ENCODE measurements at regions of chr9 and their contacts with region 1.

Region 1: DNA sequence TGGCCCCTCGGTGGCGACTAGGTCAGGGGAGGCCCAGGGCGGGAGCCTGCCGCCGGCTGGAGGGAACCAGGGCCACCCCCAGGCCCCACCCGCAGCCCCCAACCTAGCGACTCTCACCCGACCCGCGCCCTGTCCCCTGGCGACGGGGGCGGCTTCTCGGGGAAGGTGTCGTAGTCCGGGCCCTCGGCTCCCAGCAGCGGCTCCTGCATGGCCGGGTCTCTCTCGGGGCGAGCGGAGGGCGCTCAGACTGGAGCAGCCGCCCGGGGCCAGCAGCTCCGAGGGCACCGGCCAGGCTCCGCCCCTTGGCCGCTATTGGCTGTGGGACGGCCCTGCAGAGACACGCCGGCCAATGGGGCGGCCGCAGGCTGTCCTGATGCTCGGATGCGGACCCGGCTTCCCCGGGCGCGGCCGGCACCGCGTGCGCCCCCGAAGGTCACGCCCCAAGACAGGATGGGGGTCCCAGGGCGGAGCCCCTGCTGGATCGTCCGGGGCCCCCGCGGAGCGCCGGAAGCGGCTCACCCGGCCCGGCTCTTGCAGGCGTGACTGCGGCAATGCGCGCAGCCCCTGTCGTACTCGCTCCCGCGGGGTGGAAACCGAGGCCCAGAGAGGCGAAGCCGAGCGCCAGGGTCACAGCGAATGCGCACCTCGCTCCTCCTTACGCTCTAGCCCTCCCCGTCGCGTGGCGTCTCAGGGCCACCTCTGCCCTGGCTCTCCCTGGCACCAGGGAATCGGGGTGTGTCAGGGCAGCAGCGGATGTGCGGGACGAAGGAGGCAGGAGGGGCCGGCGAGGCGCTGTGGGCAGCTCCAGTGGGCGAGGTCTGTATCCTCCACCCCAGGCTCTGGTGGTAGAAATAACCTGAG is at the start of gene SLC2A6:
- DNase-seq: peak; percentile 69 to 90 (median 82)
- ATAC-seq: peak; percentile 94 to 96
- H3K4me3 Mint-ChIP-seq: peak within 1 kb of the TSS; percentile 74 to 86 (median 82)
- H3K27ac Mint-ChIP-seq: peak within 1 kb of the TSS in 9 of 10 donors; percentile 51 to 92 (median 77)
- H3K4me1 Mint-ChIP-seq: peaks cover 7 to 29% (median 13%) of the 10 kb centered on the region in 4 donors
- H3K27me3 Mint-ChIP-seq: no peaks in the 10 kb centered on the region
- polyA plus RNA-seq, gene SLC2A6: 4.0 to 6.0 (median 5.6) TPM

Region 2: GRCh38 chr9:133459476-133460404 is 19.3 kb before region 1 on chr9 and contains the start of gene CACFD1:
- POLR2A ChIA-PET with region 1: interaction called, 10 read pairs
- DNase-seq: peak; percentile 87 to 96 (median 88)
- ATAC-seq: peak; percentile 83 to 88
- H3K4me3 Mint-ChIP-seq: peak within 1 kb of the TSS; percentile 84 to 98 (median 91)
- H3K27ac Mint-ChIP-seq: peak within 1 kb of the TSS; percentile 84 to 97 (median 96)
- H3K4me1 Mint-ChIP-seq: peaks cover 4 to 15% (median 13%) of the 10 kb centered on the region in 4 donors
- H3K27me3 Mint-ChIP-seq: no peaks in the 10 kb centered on the region
- polyA plus RNA-seq, gene CACFD1: 2.5 to 3.7 (median 3.5) TPM

Region 3: GRCh38 chr9:133532937-133533668 is 54.0 kb after region 1 on chr9:
- POLR2A ChIA-PET with region 1: no interaction called
- DNase-seq: peak; percentile 36 to 87 (median 63)
- ATAC-seq: peak; percentile 37 to 63
- H3K4me3 Mint-ChIP-seq: peak overlapping the region; percentile 28 to 80 (median 64)
- H3K27ac Mint-ChIP-seq: peak overlapping the region in 9 of 10 donors; percentile 28 to 83 (median 72)
- H3K4me1 Mint-ChIP-seq: peaks cover 6 to 21% (median 17%) of the 10 kb centered on the region in 4 donors
- H3K27me3 Mint-ChIP-seq: peaks cover 0 to 8% (median 0%) of the 10 kb centered on the region in 5 donors

Region 4: GRCh38 chr9:134163353-134164196 is 684.5 kb after region 1 on chr9:
- POLR2A ChIA-PET with region 1: no interaction called
- DNase-seq: peak; percentile 56 to 81 (median 66)
- ATAC-seq: peak in 1 of 2 donors; percentile 7
- H3K4me3 Mint-ChIP-seq: peak overlapping the region in 3 of 10 donors; percentile 20 to 38 (median 26)
- H3K27ac Mint-ChIP-seq: peak overlapping the region in 2 of 10 donors; percentile 8 to 44
- H3K4me1 Mint-ChIP-seq: peaks cover 8 to 25% (median 14%) of the 10 kb centered on the region in 4 donors
- H3K27me3 Mint-ChIP-seq: no peaks in the 10 kb centered on the region